Activated CD4-positive, alpha-beta T cell treated with anti-CD3 and anti-CD28 coated beads for 36 hours (primary cell): ENCODE measurements at regions of chr3 and their contacts with region 1.

Region 1: GRCh38 chr3:111194048-111194447 is 122.4 kb downstream of the NECTIN3 start:
- DNase-seq: no peak
- ATAC-seq: no peak
- H3K4me3 Mint-ChIP-seq: no peak overlapping the region
- H3K27ac Mint-ChIP-seq: no peak overlapping the region
- H3K4me1 Mint-ChIP-seq: no peaks in the 10 kb centered on the region
- H3K27me3 Mint-ChIP-seq: no peaks in the 10 kb centered on the region

Region 2: GRCh38 chr3:111277226-111277625 is 83.2 kb after region 1 on chr3:
- CTCF ChIA-PET with region 1: no interaction called
- POLR2A ChIA-PET with region 1: no interaction called
- intact Hi-C with region 1: loop called in 1 of 2 experiments (anchors 1 kb)
- DNase-seq: no peak
- ATAC-seq: no peak
- H3K4me3 Mint-ChIP-seq: no peak overlapping the region
- H3K27ac Mint-ChIP-seq: no peak overlapping the region
- H3K4me1 Mint-ChIP-seq: peaks cover 15% of the 10 kb centered on the region
- H3K27me3 Mint-ChIP-seq: no peaks in the 10 kb centered on the region